Mammary epithelial cell (primary cell): ENCODE measurements at regions of chr15 and their contacts with region 1.

Region 1: DNA sequence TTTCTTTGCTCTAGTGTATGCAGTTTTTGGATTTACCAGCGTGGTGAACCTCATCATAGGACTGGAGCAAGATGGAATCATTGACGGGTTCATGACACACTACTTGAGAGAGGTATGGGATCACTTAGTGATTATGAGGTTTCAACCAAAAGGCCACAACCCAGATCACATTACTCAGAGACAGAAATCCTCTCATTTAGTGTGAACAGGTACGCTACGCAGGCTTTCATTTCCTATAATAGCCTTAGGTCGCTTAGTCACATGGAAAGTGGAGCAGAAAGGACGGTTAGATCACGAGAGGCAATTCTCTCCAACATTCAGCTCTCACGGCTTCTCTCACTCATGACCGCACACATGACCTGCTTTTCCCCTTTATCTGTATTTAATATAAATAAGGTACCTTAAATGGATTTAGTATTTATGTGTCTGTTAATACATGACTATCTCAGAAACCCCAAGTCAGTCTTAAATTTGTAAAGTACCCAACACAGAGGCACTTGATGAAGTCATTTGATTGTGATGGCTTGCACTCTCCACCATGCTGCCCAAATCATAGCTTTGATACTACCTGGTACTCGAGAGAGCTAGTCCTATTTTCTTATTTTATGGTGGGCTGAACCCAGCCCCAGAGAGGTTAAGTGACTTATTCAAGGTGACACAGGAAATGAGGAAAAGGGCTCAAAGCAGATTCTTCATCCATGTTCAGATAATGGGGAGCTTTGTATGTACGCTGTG is 8.6 kb downstream of the TM6SF1 start:
- DNase-seq: no peak
- H3K4me3 ChIP-seq: no peak overlapping the region
- H3K27ac ChIP-seq: no peak overlapping the region
- H3K4me1 ChIP-seq: no peaks in the 10 kb centered on the region
- H3K27me3 ChIP-seq: no peaks in the 10 kb centered on the region
- CTCF ChIP-seq: no peak

Region 2: DNA sequence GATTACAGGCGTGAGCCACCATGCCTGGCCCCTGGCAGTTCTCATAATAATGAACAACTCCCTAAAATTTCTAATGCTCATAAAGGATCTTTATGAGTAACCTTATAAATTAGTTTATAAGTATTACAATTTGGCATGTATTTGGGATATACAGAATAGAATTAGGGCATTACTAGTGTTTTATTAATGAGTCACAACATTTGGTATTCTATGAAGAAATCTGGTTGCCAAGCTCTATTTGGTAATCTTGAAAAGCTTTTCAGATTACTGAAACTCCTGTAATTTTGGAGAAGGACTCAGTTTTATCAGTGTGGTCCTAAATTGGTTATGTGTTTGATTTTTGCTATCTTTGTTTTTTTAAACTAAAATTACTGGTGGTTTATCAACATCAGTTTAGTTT is 37.3 kb after region 1 on chr15:
- CTCF ChIA-PET with region 1: no interaction called
- dilution Hi-C with region 1: loop called (anchors 5 kb)
- in situ Hi-C with region 1: no loop called
- intact Hi-C with region 1: no loop called
- DNase-seq: no peak
- H3K4me3 ChIP-seq: no peak overlapping the region
- H3K27ac ChIP-seq: no peak overlapping the region
- H3K4me1 ChIP-seq: peaks cover 6% of the 10 kb centered on the region
- H3K27me3 ChIP-seq: no peaks in the 10 kb centered on the region
- CTCF ChIP-seq: no peak

Region 3: GRCh38 chr15:83219026-83219425 is 103.0 kb after region 1 on chr15:
- CTCF ChIA-PET with region 1: no interaction called
- dilution Hi-C with region 1: loop called (anchors 5 kb)
- in situ Hi-C with region 1: no loop called
- intact Hi-C with region 1: no loop called
- DNase-seq: peak; percentile 54
- H3K4me3 ChIP-seq: no peak overlapping the region
- H3K27ac ChIP-seq: no peak overlapping the region
- H3K4me1 ChIP-seq: no peaks in the 10 kb centered on the region
- H3K27me3 ChIP-seq: no peaks in the 10 kb centered on the region
- CTCF ChIP-seq: no peak